ENCODE measurements at regions of chr4 and their contacts with region 1.

Region 1: DNA sequence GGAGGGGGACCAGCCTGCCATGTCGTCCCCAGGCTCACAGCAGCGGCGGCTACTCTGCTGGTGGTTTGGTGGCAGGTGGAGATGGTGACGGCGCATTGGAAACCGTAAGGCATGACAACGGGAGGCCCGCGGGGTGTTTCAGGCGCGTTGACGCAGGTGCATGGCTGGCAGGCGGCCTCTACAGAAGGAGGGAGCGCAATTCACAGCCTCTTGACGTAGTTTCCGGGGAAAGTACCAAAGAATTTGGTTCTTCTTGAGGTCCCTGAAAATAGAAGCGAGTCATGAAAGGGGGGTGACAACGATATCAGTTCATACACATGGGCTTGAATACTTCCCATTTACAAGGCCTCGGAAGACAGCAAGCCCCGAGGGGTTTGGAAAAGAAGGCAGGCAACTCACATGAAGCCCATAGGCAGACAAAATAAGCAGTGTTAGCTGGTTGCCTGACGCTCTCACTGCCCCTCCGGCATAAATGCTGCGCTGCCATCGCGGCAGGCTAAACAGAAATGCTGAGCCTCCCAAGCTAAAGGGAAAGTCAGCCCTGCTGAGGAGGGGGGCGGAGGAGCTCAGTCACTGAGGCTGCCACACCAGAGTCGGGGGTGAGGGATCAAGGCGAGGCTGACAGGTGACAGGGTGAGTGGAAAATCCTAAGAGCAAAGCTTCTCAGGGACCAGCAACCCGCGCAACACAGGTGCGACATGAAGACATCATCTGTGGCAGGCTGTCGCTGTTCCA is 52.3 kb upstream of the PDLIM3 start:
- DNase-seq: no peak

Region 2: GRCh38 chr4:185513489-185514181 is 74.0 kb before region 1 on chr4:
- intact Hi-C with region 1: loop called in 1 of 2 experiments (anchors 5 kb)
- DNase-seq: no peak

Region 3: DNA sequence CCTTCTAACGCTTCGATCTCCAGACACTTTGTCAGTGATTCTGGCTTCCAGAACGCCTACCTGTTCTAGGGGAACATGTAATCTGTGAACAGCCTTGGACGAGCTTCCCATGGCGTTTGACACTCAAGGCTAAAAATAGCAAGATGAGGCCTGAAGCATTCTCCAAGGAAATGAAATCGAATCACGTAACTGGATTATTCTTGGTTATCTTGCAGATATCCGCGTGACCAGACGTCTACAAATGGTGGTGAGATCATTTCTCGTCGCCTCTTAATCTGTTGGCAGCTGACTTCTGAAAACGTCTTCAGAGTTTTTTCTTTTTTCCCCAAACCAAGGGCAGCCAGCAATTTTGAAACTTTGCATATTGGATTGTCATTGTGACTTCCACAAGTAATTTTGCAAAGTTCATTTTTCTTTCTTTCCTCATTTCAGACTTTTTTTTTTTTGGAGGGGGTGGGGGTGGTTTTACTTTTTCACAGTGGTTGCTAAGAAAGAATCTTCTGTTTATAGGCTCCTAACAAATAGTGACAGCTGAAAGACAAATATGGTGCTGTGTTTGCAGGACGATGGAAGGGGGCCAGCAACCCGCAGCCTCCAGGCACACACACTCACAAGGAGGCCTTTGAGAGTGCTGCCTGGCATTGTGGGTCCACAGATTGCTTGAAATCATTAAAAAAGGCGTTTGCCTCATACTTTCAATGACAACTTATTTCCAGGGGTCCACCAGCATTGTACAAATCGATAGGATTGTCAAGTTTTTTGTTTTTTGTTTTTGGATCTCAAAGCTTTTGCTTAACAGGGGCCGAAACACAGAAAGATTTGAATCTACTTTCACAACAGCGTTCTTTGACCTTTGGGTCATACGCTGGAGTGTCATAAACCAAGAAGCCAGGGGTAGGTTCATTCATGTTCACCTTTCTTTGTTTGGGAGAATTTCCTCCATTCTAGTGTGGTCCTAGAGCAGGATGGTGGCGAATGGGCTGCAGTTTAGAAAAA is 19.9 kb before region 1 on chr4:
- intact Hi-C with region 1: loop called in 1 of 2 experiments (anchors 1 kb)
- DNase-seq: peak; percentile 93

Region 4: GRCh38 chr4:186161138-186161537 is 573.5 kb after region 1 on chr4:
- intact Hi-C with region 1: no loop called
- DNase-seq: no peak

Measured in posterior vena cava (tissue), 2 donors.